ENCODE measurements at regions of chr2 and their contacts with region 1.

Region 1: DNA sequence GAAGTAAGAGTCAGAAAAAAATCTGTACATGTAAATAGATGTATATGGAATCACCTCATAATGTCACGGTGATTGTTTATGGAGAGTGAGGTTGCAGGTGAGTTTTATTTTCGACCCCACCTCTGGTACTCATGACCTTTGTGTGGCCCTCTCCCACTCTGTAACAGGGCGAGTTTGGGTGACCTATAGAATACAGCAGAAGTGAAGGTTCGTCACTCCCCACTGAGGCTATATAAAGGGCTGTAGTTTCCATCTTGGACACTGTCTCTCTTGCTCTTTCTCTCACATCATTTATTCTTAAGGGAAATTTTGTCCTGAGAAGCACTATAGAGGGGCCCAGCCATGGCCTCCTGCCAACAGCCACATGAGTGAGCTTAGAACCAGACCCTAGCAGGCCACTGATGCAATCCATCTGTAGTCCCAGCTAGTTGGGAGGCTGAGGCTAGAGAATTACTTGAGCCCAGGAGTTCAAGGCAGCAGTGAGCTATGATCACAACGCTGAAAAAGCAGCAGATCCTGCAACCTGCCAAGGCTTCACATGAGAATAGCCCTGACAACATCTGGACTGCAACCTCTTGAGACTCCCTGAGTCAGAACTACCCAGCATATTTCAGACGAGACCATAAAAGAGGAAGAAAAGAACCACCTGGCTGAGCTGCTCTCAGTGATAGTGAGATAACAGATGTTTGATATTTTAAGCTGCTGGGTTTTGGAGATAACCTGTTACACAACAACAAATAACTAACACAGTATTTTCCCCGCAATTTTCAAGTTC is 74.3 kb upstream of the SLC1A4 start:
- DNase-seq: no peak
- ATAC-seq: no peak
- H3K4me3 ChIP-seq: no peak overlapping the region
- H3K4me3 Mint-ChIP-seq: no peak overlapping the region
- H3K27ac ChIP-seq: no peak overlapping the region
- H3K27ac Mint-ChIP-seq: no peak overlapping the region
- H3K4me1 ChIP-seq: no peaks in the 10 kb centered on the region
- H3K4me1 Mint-ChIP-seq: peaks cover 23% of the 10 kb centered on the region
- H3K27me3 ChIP-seq: no peaks in the 10 kb centered on the region
- H3K27me3 Mint-ChIP-seq: no peaks in the 10 kb centered on the region
- CTCF ChIP-seq: no peak

Region 2: GRCh38 chr2:64881037-64881492 is 33.9 kb before region 1 on chr2:
- CTCF ChIA-PET with region 1: no interaction called
- POLR2A ChIA-PET with region 1: no interaction called
- intact Hi-C with region 1: no loop called
- DNase-seq: peak in 3 of 9 experiments; percentile 47 to 72 (median 48)
- ATAC-seq: peak; percentile 82
- H3K4me3 ChIP-seq: no peak overlapping the region
- H3K4me3 Mint-ChIP-seq: no peak overlapping the region
- H3K27ac ChIP-seq: no peak overlapping the region
- H3K27ac Mint-ChIP-seq: no peak overlapping the region
- H3K4me1 ChIP-seq: peaks cover 4% of the 10 kb centered on the region
- H3K4me1 Mint-ChIP-seq: peaks cover 9% of the 10 kb centered on the region
- H3K27me3 ChIP-seq: no peaks in the 10 kb centered on the region
- H3K27me3 Mint-ChIP-seq: peaks cover 4% of the 10 kb centered on the region
- CTCF ChIP-seq: no peak

Region 3: DNA sequence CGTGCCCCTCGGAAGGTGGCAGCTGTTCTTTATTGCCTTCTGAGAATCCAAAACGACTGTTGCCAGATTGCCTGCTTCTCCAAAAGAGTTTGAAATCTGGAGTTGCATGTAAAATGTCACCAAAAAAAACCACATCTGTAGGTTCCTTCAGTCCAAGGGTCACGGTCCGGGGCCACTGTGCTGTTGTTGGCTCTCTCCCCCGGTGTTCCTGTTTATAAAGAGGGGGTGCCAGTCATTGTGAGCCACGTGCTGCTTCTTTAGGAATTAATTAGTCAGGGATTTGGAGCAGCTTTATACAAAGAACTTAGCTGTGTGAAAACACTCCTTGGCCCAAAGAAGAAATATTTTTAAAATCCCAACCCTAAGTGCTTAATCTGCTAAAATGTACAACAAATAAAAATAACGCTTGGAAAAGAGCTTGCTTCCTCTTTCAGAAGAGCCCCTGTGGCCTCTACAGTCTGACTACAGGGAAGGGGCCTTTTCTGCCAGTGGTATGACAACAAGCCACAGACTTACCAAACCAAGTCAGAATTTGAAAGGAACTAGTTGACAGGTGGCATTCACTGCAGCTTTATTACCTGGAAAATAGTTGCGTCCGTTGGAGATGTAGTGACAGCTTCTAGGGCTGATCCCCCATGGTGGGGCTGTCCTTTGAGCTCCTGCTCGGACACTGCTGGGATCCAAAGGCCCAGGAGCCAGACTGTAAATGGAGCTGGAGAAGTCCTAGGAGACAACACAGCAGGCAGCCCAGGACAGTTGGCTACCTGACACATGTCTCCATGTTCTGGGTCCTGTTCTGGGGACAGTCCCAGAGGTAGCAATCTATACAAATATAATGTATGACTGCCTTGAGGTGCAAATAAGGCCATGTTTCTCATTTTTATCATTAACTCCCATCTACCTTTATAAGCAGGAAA is 10.3 kb before region 1 on chr2:
- CTCF ChIA-PET with region 1: interaction called, 45 read pairs
- POLR2A ChIA-PET with region 1: no interaction called
- intact Hi-C with region 1: no loop called
- DNase-seq: no peak
- ATAC-seq: no peak
- H3K4me3 ChIP-seq: no peak overlapping the region
- H3K4me3 Mint-ChIP-seq: no peak overlapping the region
- H3K27ac ChIP-seq: no peak overlapping the region
- H3K27ac Mint-ChIP-seq: no peak overlapping the region
- H3K4me1 ChIP-seq: no peaks in the 10 kb centered on the region
- H3K4me1 Mint-ChIP-seq: no peaks in the 10 kb centered on the region
- H3K27me3 ChIP-seq: no peaks in the 10 kb centered on the region
- H3K27me3 Mint-ChIP-seq: peaks cover 6% of the 10 kb centered on the region
- CTCF ChIP-seq: no peak

Region 4: DNA sequence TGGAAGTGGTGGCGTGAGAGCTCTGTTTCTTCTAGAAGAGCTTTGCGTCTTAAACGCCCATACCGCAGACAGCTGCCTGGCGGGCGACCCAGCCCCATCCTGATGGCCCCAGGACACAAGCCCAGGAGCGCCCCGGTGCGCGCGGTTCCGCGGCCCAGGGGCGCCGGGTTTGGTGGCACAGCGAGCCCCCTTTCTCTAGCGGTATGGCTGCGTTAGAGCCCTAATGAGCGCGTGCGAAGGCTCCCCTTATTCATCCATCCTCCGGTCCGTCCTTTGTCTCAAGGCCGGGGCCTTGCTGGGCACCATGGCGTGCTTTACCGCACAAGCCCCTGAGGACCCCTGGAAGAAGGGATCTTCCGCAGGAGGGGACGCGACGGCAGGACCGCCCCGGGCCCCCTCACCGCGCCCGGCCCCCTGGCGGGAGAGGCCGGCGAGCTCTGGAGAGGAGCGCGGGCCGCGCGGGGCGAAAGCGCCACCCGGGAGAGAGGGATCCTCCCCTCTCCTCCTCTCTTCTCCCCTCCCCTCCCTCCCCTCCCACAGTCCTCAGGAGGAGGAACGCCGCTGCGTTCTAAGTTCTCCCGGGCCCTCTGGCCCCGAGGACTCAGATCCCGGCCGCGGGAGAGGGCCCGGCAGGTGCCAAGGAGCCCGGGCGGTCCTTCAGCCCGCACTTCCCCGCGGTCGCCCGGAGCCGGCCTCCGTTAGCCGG is 73.7 kb after region 1 on chr2:
- CTCF ChIA-PET with region 1: interaction called, 5 read pairs
- POLR2A ChIA-PET with region 1: no interaction called
- intact Hi-C with region 1: loop called in 1 of 2 experiments (anchors 5 kb)
- DNase-seq: peak; percentile 10 to 82 (median 51)
- ATAC-seq: peak; percentile 41
- H3K4me3 ChIP-seq: peak overlapping the region; percentile 57 to 68
- H3K4me3 Mint-ChIP-seq: peak overlapping the region; percentile 77
- H3K27ac ChIP-seq: peak overlapping the region; percentile 31 to 36
- H3K27ac Mint-ChIP-seq: no peak overlapping the region
- H3K4me1 ChIP-seq: peaks cover 11% of the 10 kb centered on the region
- H3K4me1 Mint-ChIP-seq: peaks cover 27% of the 10 kb centered on the region
- H3K27me3 ChIP-seq: no peaks in the 10 kb centered on the region
- H3K27me3 Mint-ChIP-seq: peaks cover 7% of the 10 kb centered on the region
- CTCF ChIP-seq: no peak

Region 5: GRCh38 chr2:65040400-65041261 is 125.7 kb after region 1 on chr2:
- CTCF ChIA-PET with region 1: interaction called, 66 read pairs
- POLR2A ChIA-PET with region 1: no interaction called
- intact Hi-C with region 1: loop called (anchors 1 kb)
- DNase-seq: peak; percentile 48 to 86 (median 77)
- ATAC-seq: peak; percentile 100
- H3K4me3 ChIP-seq: no peak overlapping the region
- H3K4me3 Mint-ChIP-seq: no peak overlapping the region
- H3K27ac ChIP-seq: no peak overlapping the region
- H3K27ac Mint-ChIP-seq: no peak overlapping the region
- H3K4me1 ChIP-seq: peaks cover 5% of the 10 kb centered on the region
- H3K4me1 Mint-ChIP-seq: peaks cover 11% of the 10 kb centered on the region
- H3K27me3 ChIP-seq: no peaks in the 10 kb centered on the region
- H3K27me3 Mint-ChIP-seq: no peaks in the 10 kb centered on the region
- CTCF ChIP-seq: peak; percentile 83

Region 6: DNA sequence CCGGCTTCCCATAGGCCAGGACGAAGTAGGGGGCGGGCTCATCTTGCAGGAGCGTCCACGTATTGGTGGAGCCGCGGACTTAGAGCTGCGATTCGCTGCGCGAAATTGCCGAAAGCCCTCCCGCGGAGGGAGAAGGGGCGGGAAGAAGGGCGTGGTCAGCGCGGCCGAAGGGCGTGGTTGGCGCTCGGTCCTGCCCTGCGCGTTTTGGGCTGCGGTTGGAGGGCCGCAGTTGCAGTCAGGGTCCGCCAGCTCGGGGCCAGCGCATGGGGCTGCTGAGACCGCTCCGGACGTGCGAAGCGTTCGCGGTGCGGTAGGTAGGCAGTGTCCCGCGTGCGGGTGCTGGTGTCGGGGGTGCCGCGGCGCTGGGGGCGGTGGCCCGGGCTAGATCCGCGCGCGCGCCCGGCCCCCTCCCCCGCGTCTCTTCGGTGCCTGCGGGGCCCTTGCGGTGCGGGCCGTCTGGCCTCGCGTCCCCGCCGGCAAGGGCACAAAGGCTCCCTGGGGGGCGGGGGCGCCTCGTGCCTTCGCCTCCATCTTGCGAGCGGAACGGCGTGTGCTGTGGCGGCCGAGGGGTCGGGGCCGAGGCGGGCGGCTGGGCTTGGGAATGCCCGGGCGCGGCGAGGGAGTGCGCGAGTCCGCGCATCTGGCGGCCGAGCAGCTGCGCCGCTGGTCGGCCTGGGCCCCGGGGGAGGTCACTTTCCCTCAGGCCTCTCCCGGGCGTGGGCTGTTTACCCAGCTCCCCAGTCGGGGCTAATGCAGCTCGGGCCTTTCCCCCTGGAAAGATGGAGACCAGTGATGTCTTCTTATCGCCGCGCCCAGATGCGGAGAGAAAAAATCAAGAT is 141.5 kb after region 1 on chr2 and contains the start of gene CEP68:
- CTCF ChIA-PET with region 1: interaction called, 14 read pairs
- POLR2A ChIA-PET with region 1: interaction called, 6 read pairs
- intact Hi-C with region 1: no loop called
- DNase-seq: peak; percentile 89 to 98 (median 96)
- ATAC-seq: peak; percentile 89
- H3K4me3 ChIP-seq: peak within 1 kb of the TSS; percentile 85 to 86
- H3K4me3 Mint-ChIP-seq: peak within 1 kb of the TSS; percentile 99
- H3K27ac ChIP-seq: peak within 1 kb of the TSS; percentile 62 to 72
- H3K27ac Mint-ChIP-seq: peak within 1 kb of the TSS; percentile 97
- H3K4me1 ChIP-seq: peaks cover 70% of the 10 kb centered on the region
- H3K4me1 Mint-ChIP-seq: peaks cover 73% of the 10 kb centered on the region
- H3K27me3 ChIP-seq: no peaks in the 10 kb centered on the region
- H3K27me3 Mint-ChIP-seq: no peaks in the 10 kb centered on the region
- CTCF ChIP-seq: no peak
- total RNA-seq, gene CEP68: 19.9 to 20.5 TPM

Region 7: GRCh38 chr2:65169760-65170136 is 254.8 kb after region 1 on chr2:
- CTCF ChIA-PET with region 1: interaction called, 56 read pairs
- POLR2A ChIA-PET with region 1: interaction called, 4 read pairs
- intact Hi-C with region 1: loop called (anchors 1 to 2 kb)
- DNase-seq: no peak
- ATAC-seq: no peak
- H3K4me3 ChIP-seq: no peak overlapping the region
- H3K4me3 Mint-ChIP-seq: no peak overlapping the region
- H3K27ac ChIP-seq: no peak overlapping the region
- H3K27ac Mint-ChIP-seq: no peak overlapping the region
- H3K4me1 ChIP-seq: no peaks in the 10 kb centered on the region
- H3K4me1 Mint-ChIP-seq: peaks cover 2% of the 10 kb centered on the region
- H3K27me3 ChIP-seq: no peaks in the 10 kb centered on the region
- H3K27me3 Mint-ChIP-seq: no peaks in the 10 kb centered on the region
- CTCF ChIP-seq: no peak

Region 8: GRCh38 chr2:65576861-65577601 is 662.1 kb after region 1 on chr2:
- CTCF ChIA-PET with region 1: interaction called, 16 read pairs
- POLR2A ChIA-PET with region 1: no interaction called
- intact Hi-C with region 1: loop called (anchors 1 kb)
- DNase-seq: no peak
- ATAC-seq: no peak
- H3K4me3 ChIP-seq: no peak overlapping the region
- H3K4me3 Mint-ChIP-seq: no peak overlapping the region
- H3K27ac ChIP-seq: no peak overlapping the region
- H3K27ac Mint-ChIP-seq: no peak overlapping the region
- H3K4me1 ChIP-seq: no peaks in the 10 kb centered on the region
- H3K4me1 Mint-ChIP-seq: peaks cover 2% of the 10 kb centered on the region
- H3K27me3 ChIP-seq: no peaks in the 10 kb centered on the region
- H3K27me3 Mint-ChIP-seq: peaks cover 11% of the 10 kb centered on the region
- CTCF ChIP-seq: no peak